GM10248 (cell line): ENCODE measurements at regions of chr1 and their contacts with region 1.

Region 1: DNA sequence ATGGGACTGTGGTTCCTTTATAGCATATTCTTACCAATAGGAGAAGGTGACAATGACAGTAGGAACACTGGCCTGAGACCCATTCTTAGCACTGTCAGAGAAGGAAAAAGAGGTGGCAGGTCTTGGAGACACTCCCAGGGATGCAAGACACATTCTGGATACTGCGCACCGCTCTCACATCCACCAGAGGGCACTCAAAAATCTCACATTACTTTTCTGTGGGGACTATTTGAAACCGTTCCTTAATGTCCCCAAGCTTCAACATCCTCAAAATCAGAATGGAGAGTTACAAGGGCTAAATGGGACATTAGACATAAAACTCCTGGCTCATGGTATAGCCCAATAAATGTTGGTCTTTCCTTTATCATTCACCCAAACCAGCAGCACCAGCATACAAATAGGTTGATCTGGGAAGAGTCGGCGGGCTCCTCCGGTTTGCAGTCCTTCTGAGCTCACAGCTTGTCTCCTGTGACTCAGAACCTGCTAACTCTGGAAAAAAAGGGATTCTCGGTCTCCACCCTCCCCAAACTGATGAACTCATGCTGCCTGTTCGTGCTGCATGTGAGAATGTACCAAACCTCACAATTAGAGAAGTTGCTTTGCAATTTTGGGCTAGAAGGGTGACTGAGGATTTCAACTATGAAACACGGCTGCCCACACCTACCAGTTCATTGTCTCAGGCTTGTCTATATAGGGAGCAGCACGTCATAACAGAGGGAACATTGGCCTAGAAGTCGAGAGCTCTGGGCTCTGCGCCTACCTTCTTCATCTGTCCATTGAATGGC is 40.2 kb downstream of the IL12RB2 start:
- DNase-seq: peak; percentile 36
- CTCF ChIP-seq: peak; percentile 41

Region 2: DNA sequence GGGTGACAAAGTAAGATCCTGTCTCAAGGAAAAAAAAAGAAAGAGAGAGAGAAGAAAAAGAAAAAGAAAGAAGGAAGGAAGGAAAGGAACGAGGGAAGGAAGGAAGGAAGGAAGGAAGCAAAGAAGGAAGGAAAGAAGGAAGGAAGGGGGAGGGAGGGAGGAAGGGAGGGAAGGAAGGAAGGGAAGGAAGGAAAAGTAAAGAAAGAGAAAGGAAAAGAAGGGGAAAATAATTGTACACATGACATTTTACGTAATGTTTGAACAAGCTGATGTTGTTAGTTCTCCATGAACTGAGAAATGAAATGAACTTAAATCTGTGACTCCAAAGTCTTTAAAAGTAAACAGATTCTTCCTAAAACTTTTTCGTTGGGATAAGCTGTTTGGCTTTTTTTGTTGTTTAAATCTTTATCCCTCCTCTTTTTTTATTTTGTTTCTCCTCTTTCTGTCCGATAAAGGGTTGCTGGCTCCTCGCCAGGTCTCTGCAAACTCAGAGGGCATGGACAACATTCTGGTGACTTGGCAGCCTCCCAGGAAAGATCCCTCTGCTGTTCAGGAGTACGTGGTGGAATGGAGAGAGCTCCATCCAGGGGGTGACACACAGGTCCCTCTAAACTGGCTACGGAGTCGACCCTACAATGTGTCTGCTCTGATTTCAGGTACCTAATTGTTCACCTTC is 19.6 kb after region 1 on chr1:
- CTCF ChIA-PET with region 1: interaction called, 14 read pairs
- POLR2A ChIA-PET with region 1: no interaction called
- DNase-seq: no peak
- CTCF ChIP-seq: no peak